Naive thymus-derived CD4-positive, alpha-beta T cell (primary cell): ENCODE measurements at regions of chr3 and their contacts with region 1.

Region 1: GRCh38 chr3:138329127-138329983 is at the start of gene NME9:
- DNase-seq: peak; percentile 79 to 91 (median 86)
- ATAC-seq: peak; percentile 95
- H3K4me3 ChIP-seq: peak within 1 kb of the TSS; percentile 78
- H3K4me3 Mint-ChIP-seq: peak within 1 kb of the TSS; percentile 91 to 99 (median 97)
- H3K27ac ChIP-seq: peak within 1 kb of the TSS; percentile 86
- H3K27ac Mint-ChIP-seq: peak within 1 kb of the TSS; percentile 85 to 98 (median 94)
- H3K4me1 ChIP-seq: peaks cover 5 to 8% of the 10 kb centered on the region in 2 donors
- H3K4me1 Mint-ChIP-seq: peaks cover 12 to 40% (median 36%) of the 10 kb centered on the region in 7 donors
- H3K27me3 ChIP-seq: no peaks in the 10 kb centered on the region
- H3K27me3 Mint-ChIP-seq: peaks cover 0 to 10% (median 0%) of the 10 kb centered on the region in 5 donors
- total RNA-seq, gene NME9: 0.69 to 2.0 (median 1.2) TPM in 4 of 5 experiments, not detected in the other

Region 2: GRCh38 chr3:138068579-138069174 is 260.7 kb before region 1 on chr3:
- CTCF ChIA-PET with region 1: no interaction called
- POLR2A ChIA-PET with region 1: no interaction called
- intact Hi-C with region 1: loop called (anchors 5 kb)
- DNase-seq: peak; percentile 36 to 78 (median 55)
- ATAC-seq: peak; percentile 85
- H3K4me3 ChIP-seq: no peak overlapping the region
- H3K4me3 Mint-ChIP-seq: no peak overlapping the region
- H3K27ac ChIP-seq: no peak overlapping the region
- H3K27ac Mint-ChIP-seq: no peak overlapping the region
- H3K4me1 ChIP-seq: no peaks in the 10 kb centered on the region
- H3K4me1 Mint-ChIP-seq: peaks cover 0 to 8% (median 0%) of the 10 kb centered on the region in 7 donors
- H3K27me3 ChIP-seq: no peaks in the 10 kb centered on the region
- H3K27me3 Mint-ChIP-seq: peaks cover 6 to 15% (median 12%) of the 10 kb centered on the region in 5 donors

Region 3: DNA sequence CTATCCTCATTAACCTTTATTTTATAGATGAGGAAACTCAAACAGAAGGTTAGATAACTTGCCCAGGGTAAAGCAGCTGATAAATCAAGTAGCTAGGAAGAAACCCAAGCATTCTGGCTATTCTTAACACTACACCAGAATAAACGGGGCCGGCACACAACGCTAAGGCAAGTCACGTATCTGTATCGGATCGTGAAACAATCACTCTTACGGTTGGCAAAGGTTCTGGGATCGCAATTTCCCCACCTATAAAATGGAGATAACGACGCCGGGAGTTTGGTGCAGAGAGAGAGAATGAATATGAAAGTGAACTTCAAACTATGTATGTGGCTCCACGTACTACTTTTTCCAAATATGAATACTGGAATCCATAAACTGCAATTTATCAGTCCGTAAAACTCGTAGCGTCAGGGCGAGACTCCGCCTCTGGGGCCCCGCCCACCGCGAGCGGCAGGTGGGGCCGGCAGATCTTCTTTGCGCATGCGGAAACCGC is 142.5 kb before region 1 on chr3:
- CTCF ChIA-PET with region 1: interaction called, 7 read pairs
- POLR2A ChIA-PET with region 1: interaction called, 4 read pairs
- intact Hi-C with region 1: loop called (anchors 1 kb)
- DNase-seq: peak; percentile 83 to 91 (median 87)
- ATAC-seq: peak; percentile 96
- H3K4me3 ChIP-seq: peak overlapping the region; percentile 98
- H3K4me3 Mint-ChIP-seq: peak overlapping the region; percentile 89 to 99 (median 97)
- H3K27ac ChIP-seq: peak overlapping the region; percentile 86
- H3K27ac Mint-ChIP-seq: peak overlapping the region; percentile 92 to 96 (median 93)
- H3K4me1 ChIP-seq: peaks cover 13 to 24% of the 10 kb centered on the region in 2 donors
- H3K4me1 Mint-ChIP-seq: peaks cover 32 to 54% (median 45%) of the 10 kb centered on the region in 7 donors
- H3K27me3 ChIP-seq: no peaks in the 10 kb centered on the region
- H3K27me3 Mint-ChIP-seq: peaks cover 0 to 19% (median 9%) of the 10 kb centered on the region in 5 donors

Region 4: DNA sequence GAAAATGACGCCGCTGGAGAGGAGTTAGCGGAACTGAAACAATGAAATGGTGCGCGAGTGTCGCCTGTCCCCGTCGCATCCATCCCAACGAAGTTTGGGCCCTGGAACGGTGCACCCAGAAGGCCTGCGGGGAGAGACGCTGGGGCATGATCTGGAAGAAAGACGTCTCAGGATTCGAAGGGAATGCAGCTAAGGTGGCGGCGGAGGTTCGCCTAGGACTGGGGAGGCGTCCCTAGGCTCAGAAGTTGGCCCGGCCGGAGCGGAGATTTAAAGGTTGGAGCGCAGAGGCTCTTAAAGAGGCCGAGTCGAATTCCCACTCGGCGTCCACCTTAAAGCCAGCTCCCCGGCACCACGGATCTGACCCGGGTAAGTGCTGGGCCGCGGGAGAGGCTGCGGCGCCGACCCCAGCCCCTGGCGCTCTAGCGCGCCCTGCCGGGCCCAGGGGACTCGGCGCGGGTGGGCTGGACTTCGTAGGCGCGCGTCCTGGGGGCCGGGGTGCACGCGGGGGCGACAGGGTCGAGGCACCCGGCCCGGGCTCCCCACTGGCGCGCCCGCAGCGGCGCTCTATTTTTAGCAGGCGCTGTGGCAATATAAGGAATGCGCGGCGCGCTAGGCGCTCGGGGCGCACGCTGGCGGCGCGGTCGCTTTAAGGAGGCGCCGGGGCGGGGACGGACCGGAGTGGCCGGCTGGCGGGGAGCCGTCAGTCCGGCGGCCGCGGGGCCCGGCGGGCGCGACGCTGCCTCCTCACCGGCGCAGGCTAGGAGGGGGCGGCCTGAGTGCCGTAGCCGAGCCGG is 18.8 kb after region 1 on chr3 and contains the start of gene MRAS:
- CTCF ChIA-PET with region 1: interaction called, 4 read pairs
- POLR2A ChIA-PET with region 1: no interaction called
- intact Hi-C with region 1: loop called (anchors 1 to 2 kb)
- DNase-seq: peak; percentile 10 to 44 (median 27)
- ATAC-seq: peak; percentile 68
- H3K4me3 ChIP-seq: peak within 1 kb of the TSS; percentile 50
- H3K4me3 Mint-ChIP-seq: peak within 1 kb of the TSS; percentile 90 to 99 (median 95)
- H3K27ac ChIP-seq: no peak within 1 kb of the TSS
- H3K27ac Mint-ChIP-seq: peak within 1 kb of the TSS in 3 of 9 donors; percentile 22 to 65 (median 41)
- H3K4me1 ChIP-seq: no peaks in the 10 kb centered on the region
- H3K4me1 Mint-ChIP-seq: peaks cover 0 to 11% (median 9%) of the 10 kb centered on the region in 7 donors
- H3K27me3 ChIP-seq: no peaks in the 10 kb centered on the region
- H3K27me3 Mint-ChIP-seq: peaks cover 26 to 43% (median 28%) of the 10 kb centered on the region in 5 donors
- total RNA-seq, gene MRAS: 0.05 to 4.9 (median 0.80) TPM

Region 5: DNA sequence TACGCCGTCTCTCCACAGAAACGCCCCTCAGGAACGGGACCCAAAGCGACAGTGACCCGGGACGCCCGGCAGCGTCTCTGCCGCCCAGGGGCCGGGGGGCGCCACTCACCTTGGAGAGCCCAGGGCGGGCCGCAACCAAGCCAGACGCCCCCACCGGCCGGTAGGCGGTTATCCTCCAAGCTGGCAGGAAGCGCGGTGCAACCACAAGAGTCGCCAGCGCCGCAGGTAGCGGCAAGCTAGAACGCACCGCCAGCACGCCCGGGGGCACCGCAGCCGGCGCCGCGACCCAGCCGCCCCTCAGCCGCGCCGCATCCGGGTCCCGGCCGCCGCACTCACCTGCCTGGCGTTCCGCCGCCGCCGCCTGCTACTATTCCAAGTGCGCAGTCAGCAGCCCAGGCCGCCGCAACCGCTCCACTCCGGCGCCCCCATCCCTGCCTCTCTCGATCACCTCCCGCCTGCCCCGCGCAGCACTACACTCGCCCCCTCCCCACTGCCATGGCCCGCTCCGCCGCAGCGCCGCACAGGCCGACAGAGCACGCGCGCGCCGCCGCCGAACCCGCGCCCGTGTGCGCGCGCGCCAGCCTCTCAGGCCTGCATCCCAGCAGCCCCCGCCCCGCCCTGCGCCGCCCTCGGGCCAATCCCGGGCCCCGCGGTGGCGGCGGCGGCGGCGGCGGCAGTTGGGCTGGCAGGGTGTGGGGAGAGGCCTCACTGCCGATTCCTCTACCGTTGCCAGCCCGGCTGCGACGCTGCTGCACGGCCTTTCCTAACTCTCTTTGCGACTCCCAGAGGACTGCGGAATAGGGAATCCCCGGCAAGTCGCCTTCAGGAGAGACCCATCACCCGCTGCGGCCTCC is 505.2 kb after region 1 on chr3 and contains the start of gene PIK3CB:
- CTCF ChIA-PET with region 1: no interaction called
- POLR2A ChIA-PET with region 1: interaction called, 3 read pairs
- intact Hi-C with region 1: loop called in 1 of 2 experiments (anchors 2 kb)
- DNase-seq: peak; percentile 80 to 92 (median 90)
- ATAC-seq: peak; percentile 93
- H3K4me3 ChIP-seq: peak within 1 kb of the TSS; percentile 90
- H3K4me3 Mint-ChIP-seq: peak within 1 kb of the TSS; percentile 84 to 100 (median 96)
- H3K27ac ChIP-seq: peak within 1 kb of the TSS; percentile 80
- H3K27ac Mint-ChIP-seq: peak within 1 kb of the TSS; percentile 90 to 100 (median 99)
- H3K4me1 ChIP-seq: peaks cover 16 to 21% of the 10 kb centered on the region in 2 donors
- H3K4me1 Mint-ChIP-seq: peaks cover 19 to 36% (median 26%) of the 10 kb centered on the region in 7 donors
- H3K27me3 ChIP-seq: no peaks in the 10 kb centered on the region
- H3K27me3 Mint-ChIP-seq: no peaks in the 10 kb centered on the region
- total RNA-seq, gene PIK3CB: 22.2 to 46.9 (median 38.3) TPM

Region 6: DNA sequence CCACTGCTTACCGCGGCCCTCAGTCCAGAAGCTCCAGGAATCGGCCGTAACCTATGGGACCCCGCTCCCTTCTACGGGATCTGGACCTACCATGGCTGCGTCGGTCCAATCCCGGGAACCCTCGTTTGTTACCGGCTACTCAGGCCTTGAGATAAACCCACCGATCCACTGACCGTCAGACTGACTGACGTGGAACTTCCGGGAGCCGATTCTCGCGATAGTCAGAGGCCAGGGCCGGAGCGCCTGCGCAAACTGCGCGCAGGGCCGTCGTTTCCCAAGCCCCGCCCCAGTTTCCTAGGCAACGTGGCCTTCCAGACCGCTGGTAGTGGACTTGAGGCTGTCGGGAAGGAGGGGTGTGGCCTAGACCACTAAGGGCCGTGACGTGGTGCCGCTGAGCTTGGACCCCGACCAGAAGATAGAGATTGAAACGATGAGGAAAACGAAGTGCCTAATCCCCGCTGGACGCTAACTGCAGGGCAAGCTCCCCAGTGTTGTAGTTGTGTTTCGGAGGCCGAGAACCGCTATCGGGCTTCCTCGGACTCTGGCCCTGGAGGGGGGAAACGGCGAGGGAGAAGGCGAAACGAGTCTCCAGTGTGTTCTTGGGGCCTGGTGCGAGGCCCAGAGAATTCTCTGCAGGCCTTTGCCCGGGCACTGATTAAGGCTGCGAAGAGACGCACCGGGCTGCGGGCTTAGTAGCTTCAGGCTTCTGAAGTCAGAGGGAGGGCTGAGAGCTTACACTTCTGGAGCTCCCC is 1060.3 kb after region 1 on chr3 and contains the start of gene COPB2:
- CTCF ChIA-PET with region 1: no interaction called
- POLR2A ChIA-PET with region 1: no interaction called
- intact Hi-C with region 1: loop called in 1 of 2 experiments (anchors 1 kb)
- DNase-seq: peak; percentile 84 to 97 (median 87)
- ATAC-seq: peak; percentile 97
- H3K4me3 ChIP-seq: peak within 1 kb of the TSS; percentile 91
- H3K4me3 Mint-ChIP-seq: peak within 1 kb of the TSS; percentile 87 to 100 (median 99)
- H3K27ac ChIP-seq: peak within 1 kb of the TSS; percentile 93
- H3K27ac Mint-ChIP-seq: peak within 1 kb of the TSS; percentile 97 to 100 (median 99)
- H3K4me1 ChIP-seq: peaks cover 5 to 13% of the 10 kb centered on the region in 2 donors
- H3K4me1 Mint-ChIP-seq: peaks cover 34 to 70% (median 60%) of the 10 kb centered on the region in 7 donors
- H3K27me3 ChIP-seq: no peaks in the 10 kb centered on the region
- H3K27me3 Mint-ChIP-seq: peaks cover 0 to 13% (median 0%) of the 10 kb centered on the region in 5 donors
- total RNA-seq, gene COPB2: 23.5 to 109 (median 64.5) TPM